ENCODE measurements at regions of chr19 and their contacts with region 1.

Region 1: DNA sequence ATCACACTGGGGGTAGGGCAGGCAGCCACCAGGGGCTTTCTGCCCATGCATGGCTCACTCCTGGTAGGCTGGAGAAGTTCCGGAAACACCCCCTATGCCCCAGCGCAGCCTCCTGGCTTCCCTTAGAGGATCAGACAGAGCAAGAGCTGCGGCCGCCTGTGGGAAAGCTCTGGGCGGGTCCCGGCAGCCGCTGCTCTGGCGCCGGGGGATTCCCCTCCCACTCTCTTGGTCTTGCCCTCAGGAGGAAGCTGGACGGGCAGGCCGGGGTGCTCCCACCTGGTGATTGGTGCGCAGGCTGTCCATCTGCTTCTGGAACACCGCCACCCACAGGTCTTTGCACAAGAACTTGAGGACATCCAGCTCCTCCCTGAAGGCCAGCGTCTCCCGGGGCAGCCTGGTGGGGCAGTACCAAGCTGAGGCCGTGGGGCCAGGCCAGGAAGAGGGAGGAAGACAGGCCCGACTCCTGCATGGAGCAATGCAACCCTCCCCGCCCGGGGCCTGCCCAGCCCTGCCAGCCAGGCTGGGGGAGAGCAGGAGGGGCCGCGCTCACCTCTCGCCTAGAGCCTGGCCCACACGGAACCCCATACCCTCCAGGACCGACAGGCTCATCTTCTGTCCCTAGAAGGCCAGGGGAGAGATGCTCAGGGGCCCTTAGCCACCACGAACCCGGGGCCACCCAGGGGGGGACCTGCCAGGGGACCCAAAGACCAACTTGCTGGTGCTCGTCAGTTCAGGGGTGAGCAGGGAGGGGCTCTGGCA is 4.0 kb upstream of the NKPD1 start:
- DNase-seq: peak; percentile 50 to 69
- H3K4me3 ChIP-seq: no peak overlapping the region
- H3K27ac ChIP-seq: no peak overlapping the region
- H3K4me1 ChIP-seq: peaks cover 0 to 17% (median 8%) of the 10 kb centered on the region in 4 experiments; a peak in 5 of 7 replicates
- H3K27me3 ChIP-seq: peaks cover 0 to 5% (median 1%) of the 10 kb centered on the region in 4 experiments; a peak in 3 of 7 replicates
- CTCF ChIP-seq: peak in 1 of 3 experiments; percentile 2; a peak in 2 of 4 replicates
- EP300 ChIP-seq: no peak
- POLR2A ChIP-seq: no peak
- RAD21 ChIP-seq: no peak

Region 2: GRCh38 chr19:45097776-45098520 is 66.8 kb before region 1 on chr19:
- CTCF ChIA-PET with region 1: no interaction called
- POLR2A ChIA-PET with region 1: no interaction called
- DNase-seq: no peak
- H3K4me3 ChIP-seq: no peak overlapping the region
- H3K27ac ChIP-seq: no peak overlapping the region
- H3K4me1 ChIP-seq: peaks cover 0 to 27% (median 17%) of the 10 kb centered on the region in 4 experiments; a peak in 6 of 7 replicates
- H3K27me3 ChIP-seq: no peaks in the 10 kb centered on the region
- CTCF ChIP-seq: no peak
- EP300 ChIP-seq: no peak
- POLR2A ChIP-seq: no peak
- RAD21 ChIP-seq: no peak

Region 3: GRCh38 chr19:45146251-45146650 is 18.5 kb before region 1 on chr19:
- CTCF ChIA-PET with region 1: interaction called, 32 read pairs
- POLR2A ChIA-PET with region 1: interaction called, 20 read pairs
- DNase-seq: no peak
- H3K4me3 ChIP-seq: no peak overlapping the region
- H3K27ac ChIP-seq: no peak overlapping the region
- H3K4me1 ChIP-seq: no peaks in the 10 kb centered on the region; a peak in 1 of 7 replicates
- H3K27me3 ChIP-seq: peaks cover 0 to 3% (median 1%) of the 10 kb centered on the region in 4 experiments; a peak in 2 of 7 replicates
- CTCF ChIP-seq: peak in 1 of 3 experiments; percentile 11; a peak in 1 of 4 replicates
- EP300 ChIP-seq: no peak
- POLR2A ChIP-seq: no peak
- RAD21 ChIP-seq: no peak

Region 4: DNA sequence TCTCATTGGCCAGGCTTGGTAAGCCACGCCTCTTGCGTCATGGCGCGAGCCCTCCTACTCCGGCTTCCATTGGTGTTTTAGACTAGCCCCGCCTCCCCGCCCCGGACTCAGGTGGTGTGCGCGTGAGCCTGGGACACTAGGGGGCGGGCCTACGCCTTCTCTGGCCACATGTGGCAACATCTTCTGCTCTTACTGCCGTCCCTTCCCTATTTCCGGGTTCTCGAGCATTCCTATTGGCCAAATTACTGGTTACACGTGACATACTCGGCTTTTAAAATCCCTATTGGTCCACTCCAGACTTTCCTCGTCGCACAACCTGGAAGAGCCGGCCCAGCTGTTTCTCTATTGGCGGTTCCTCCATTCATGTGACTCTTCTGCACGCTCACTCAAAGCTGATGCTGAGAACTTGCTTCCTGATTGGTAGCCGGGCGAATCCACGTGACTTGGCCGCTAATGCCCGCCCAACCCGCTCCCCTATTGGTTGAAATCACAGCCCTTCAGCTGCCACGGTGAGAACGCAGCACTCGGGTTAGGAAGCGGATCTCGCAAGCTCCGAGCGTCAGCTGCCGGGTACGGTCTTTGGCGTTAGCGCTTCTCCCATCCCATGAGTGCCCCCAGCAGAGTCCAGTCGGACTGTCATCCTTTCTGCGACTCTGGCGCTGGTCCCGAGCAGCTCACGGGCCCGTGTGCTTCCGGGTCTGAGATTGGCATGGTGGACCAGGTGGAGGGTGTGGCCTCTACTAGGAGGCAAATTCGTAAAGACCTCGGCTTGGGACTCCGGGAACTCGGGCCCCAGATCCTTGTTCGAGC is 13.7 kb after region 1 on chr19 and contains the start of gene BLOC1S3:
- CTCF ChIA-PET with region 1: interaction called, 54 read pairs
- POLR2A ChIA-PET with region 1: interaction called, 9 read pairs
- DNase-seq: peak; percentile 98 to 99
- H3K4me3 ChIP-seq: peak within 1 kb of the TSS; percentile 79 to 97 (median 93)
- H3K27ac ChIP-seq: peak within 1 kb of the TSS; percentile 82
- H3K4me1 ChIP-seq: peaks cover 0 to 5% (median 0%) of the 10 kb centered on the region in 4 experiments; a peak in 5 of 7 replicates
- H3K27me3 ChIP-seq: no peaks in the 10 kb centered on the region
- CTCF ChIP-seq: peak; percentile 19 to 70 (median 63); a peak in 3 of 4 replicates
- EP300 ChIP-seq: no peak
- POLR2A ChIP-seq: no peak
- RAD21 ChIP-seq: no peak
- total RNA-seq, gene BLOC1S3: 6.0 and 8.0 TPM in 2 replicates

Region 5: GRCh38 chr19:45187421-45188100 is 22.8 kb after region 1 on chr19:
- CTCF ChIA-PET with region 1: interaction called, 54 read pairs
- POLR2A ChIA-PET with region 1: interaction called, 3 read pairs
- DNase-seq: peak in 1 of 2 experiments; percentile 61
- H3K4me3 ChIP-seq: no peak overlapping the region
- H3K27ac ChIP-seq: no peak overlapping the region
- H3K4me1 ChIP-seq: peaks cover 0 to 3% (median 2%) of the 10 kb centered on the region in 4 experiments; a peak in 3 of 7 replicates
- H3K27me3 ChIP-seq: no peaks in the 10 kb centered on the region; a peak in 1 of 7 replicates
- CTCF ChIP-seq: peak in 2 of 3 experiments; percentile 71 to 74; a peak in 3 of 4 replicates
- EP300 ChIP-seq: no peak
- POLR2A ChIP-seq: no peak
- RAD21 ChIP-seq: peak; percentile 65 to 75

Region 6: DNA sequence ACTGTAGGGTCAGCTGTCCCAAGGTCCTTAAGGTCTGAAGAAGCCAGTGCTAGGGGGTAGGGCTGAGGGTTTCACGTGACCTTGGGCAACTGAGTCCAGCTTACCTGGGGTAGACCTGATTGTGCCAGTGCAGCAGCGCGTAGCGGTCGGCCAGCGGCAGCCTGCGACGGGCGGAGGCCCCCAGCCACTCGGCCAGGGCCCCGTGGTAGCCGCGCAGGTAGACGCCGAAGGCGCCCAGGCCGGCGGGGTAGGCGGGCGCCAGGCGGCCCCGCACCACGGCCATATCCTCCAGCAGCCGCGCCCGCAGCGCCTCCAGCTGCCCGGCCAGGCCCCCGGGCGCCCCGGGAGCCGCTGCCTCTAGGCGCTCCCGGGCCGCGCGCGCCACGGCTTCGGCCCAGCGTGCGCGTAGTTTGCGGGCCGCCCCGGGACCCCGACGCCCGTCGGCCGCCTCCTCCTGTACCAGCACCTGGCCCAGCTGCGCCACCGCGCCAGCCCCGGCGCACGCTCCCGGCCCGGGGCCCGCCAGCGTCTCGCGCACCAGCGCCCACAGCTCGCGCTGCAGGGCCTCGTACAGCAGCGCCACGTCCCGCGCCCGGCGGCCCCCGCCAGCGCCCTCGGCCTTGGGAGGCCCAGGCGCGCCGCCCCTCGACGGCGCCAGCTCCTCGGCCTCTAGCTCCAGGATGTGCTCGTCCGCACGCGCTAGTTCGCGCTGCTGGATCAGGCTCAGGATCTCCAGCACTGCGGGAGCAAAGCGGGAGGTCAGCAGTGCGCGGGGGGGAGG is 69.5 kb after region 1 on chr19:
- CTCF ChIA-PET with region 1: no interaction called
- POLR2A ChIA-PET with region 1: no interaction called
- DNase-seq: peak in 1 of 2 experiments; percentile 77
- H3K4me3 ChIP-seq: peak overlapping the region; percentile 12 to 58 (median 26)
- H3K27ac ChIP-seq: no peak overlapping the region
- H3K4me1 ChIP-seq: peaks cover 0 to 8% (median 5%) of the 10 kb centered on the region in 4 experiments; a peak in 4 of 7 replicates
- H3K27me3 ChIP-seq: peaks cover 26 to 48% (median 44%) of the 10 kb centered on the region in 4 experiments
- CTCF ChIP-seq: no peak
- EP300 ChIP-seq: no peak
- POLR2A ChIP-seq: no peak
- RAD21 ChIP-seq: no peak

Region 7: DNA sequence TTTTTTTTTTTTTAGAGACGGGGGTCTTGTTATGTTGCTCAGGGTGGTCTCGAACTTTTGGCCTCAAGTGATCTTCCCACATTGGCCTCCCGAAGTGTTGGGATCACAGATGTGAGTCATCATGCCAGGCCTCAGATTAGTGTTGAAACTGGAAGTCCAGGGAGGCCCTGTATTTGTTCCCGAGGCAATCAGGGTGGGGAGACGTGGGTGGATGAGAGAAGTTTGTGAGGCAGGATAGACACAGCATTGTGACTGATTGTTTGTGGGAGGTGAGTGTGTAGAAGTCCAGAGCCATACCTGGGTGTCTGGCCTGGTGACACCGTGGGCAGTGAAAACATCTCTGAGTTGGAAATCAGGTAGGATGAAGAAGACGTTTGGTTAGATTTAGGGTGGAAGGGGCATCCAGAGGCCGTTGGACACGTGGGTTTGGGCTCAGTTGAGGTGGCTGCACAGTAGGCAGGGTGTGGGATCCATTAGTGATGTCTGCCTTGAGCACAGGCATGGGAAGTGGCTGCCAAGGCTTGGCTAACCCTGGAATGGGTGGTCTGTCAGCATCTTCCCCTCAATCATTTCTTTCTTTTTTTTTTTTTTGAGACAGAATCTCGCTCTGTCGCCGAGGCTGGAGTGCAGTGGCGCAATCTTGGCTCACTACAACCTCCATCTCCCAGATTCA is 319.7 kb after region 1 on chr19:
- CTCF ChIA-PET with region 1: no interaction called
- POLR2A ChIA-PET with region 1: no interaction called
- DNase-seq: no peak
- H3K4me3 ChIP-seq: no peak overlapping the region
- H3K27ac ChIP-seq: no peak overlapping the region
- H3K4me1 ChIP-seq: peaks cover 0 to 3% (median 0%) of the 10 kb centered on the region in 4 experiments; a peak in 1 of 7 replicates
- H3K27me3 ChIP-seq: no peaks in the 10 kb centered on the region
- CTCF ChIP-seq: no peak
- EP300 ChIP-seq: no peak
- POLR2A ChIP-seq: no peak
- RAD21 ChIP-seq: no peak